ENCODE measurements at regions of chr3 and their contacts with region 1.

Region 1: GRCh38 chr3:149273096-149273751 is 51.6 kb upstream of the CP start:
- DNase-seq: no peak
- H3K4me3 ChIP-seq: no peak overlapping the region
- H3K27ac ChIP-seq: no peak overlapping the region
- H3K4me1 ChIP-seq: peaks cover 0 to 13% (median 0%) of the 10 kb centered on the region in 3 donors
- H3K27me3 ChIP-seq: no peaks in the 10 kb centered on the region
- CTCF ChIP-seq: peak; percentile 59 to 94 (median 90)
- POLR2A ChIP-seq: no peak

Region 2: GRCh38 chr3:148955544-148956346 is 317.5 kb before region 1 on chr3:
- intact Hi-C with region 1: loop called (anchors 5 kb)
- DNase-seq: no peak
- H3K4me3 ChIP-seq: no peak overlapping the region
- H3K27ac ChIP-seq: peak overlapping the region; percentile 69 to 94 (median 82)
- H3K4me1 ChIP-seq: peaks cover 0 to 15% (median 7%) of the 10 kb centered on the region in 3 donors
- H3K27me3 ChIP-seq: no peaks in the 10 kb centered on the region
- CTCF ChIP-seq: peak in 4 of 6 experiments; percentile 40 to 49 (median 46)
- POLR2A ChIP-seq: no peak

Region 3: GRCh38 chr3:149115114-149115513 is 158.1 kb before region 1 on chr3:
- intact Hi-C with region 1: loop called (anchors 5 kb)
- DNase-seq: no peak
- H3K4me3 ChIP-seq: no peak overlapping the region
- H3K27ac ChIP-seq: no peak overlapping the region
- H3K4me1 ChIP-seq: no peaks in the 10 kb centered on the region
- H3K27me3 ChIP-seq: no peaks in the 10 kb centered on the region
- CTCF ChIP-seq: no peak
- POLR2A ChIP-seq: no peak

Region 4: DNA sequence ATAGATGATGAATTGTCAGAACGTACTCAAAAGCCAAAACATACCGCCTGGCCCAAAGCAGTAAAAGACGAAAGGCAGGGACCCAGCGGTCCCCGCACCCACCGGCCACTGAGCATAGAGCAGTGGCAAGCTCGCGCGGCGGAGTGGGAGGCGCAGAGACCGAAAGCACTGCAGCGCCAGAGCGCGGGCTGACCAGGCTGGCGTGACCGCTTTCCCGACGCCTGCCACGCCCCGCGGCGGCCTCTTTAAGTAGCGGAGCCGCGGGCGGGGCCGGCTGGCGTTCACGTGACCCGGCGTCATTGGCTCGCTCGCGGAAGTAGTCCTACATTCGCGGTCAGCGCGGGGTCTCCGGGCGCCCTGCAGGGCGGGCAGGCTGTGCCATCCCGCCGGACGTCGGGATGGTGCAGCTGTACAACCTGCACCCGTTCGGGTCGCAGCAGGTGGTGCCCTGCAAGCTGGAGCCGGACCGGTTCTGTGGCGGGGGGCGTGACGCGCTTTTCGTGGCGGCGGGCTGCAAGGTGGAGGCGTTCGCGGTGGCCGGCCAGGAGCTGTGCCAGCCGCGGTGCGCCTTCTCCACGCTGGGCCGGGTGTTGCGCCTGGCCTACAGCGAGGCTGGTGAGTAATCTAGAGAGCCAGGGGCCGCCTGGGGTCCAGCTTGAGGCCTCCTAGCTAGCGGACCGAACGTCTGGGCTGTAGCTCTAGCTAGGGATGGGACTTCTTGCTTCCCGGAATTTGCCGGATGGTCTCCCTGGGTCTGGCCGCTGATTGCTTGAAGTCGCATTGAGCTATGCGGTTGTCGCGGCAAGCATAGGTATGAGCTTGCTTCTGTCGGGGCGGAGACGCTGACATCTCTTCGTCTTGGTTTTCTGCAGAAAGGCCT is 143.7 kb before region 1 on chr3 and contains the start of gene HPS3:
- intact Hi-C with region 1: loop called (anchors 5 kb)
- DNase-seq: peak; percentile 71
- H3K4me3 ChIP-seq: peak within 1 kb of the TSS; percentile 77 to 92 (median 88)
- H3K27ac ChIP-seq: peak within 1 kb of the TSS; percentile 84 to 90 (median 90)
- H3K4me1 ChIP-seq: peaks cover 0 to 47% (median 14%) of the 10 kb centered on the region in 3 donors
- H3K27me3 ChIP-seq: no peaks in the 10 kb centered on the region
- CTCF ChIP-seq: peak in 3 of 6 experiments; percentile 11 to 26 (median 13)
- POLR2A ChIP-seq: peak in 3 of 4 donors; percentile 84 to 94 (median 89)
- total RNA-seq, gene HPS3: 4.3 to 11.8 (median 9.7) TPM

Region 5: GRCh38 chr3:149188494-149188893 is 84.7 kb before region 1 on chr3:
- intact Hi-C with region 1: no loop called
- DNase-seq: no peak
- H3K4me3 ChIP-seq: no peak overlapping the region
- H3K27ac ChIP-seq: no peak overlapping the region
- H3K4me1 ChIP-seq: no peaks in the 10 kb centered on the region
- H3K27me3 ChIP-seq: no peaks in the 10 kb centered on the region
- CTCF ChIP-seq: no peak
- POLR2A ChIP-seq: no peak

Measured in esophagus squamous epithelium (tissue), 5 donors.